IMR-90 (cell line): ENCODE measurements at regions of chr2 and their contacts with region 1.

Region 1: GRCh38 chr2:37648331-37649011 is 23.0 kb downstream of the CDC42EP3 start:
- DNase-seq: no peak
- ATAC-seq: peak; percentile 8
- H3K4me3 ChIP-seq: no peak overlapping the region
- H3K27ac ChIP-seq: peak overlapping the region; percentile 71; the same call in 1 of the 2 replicates
- H3K4me1 ChIP-seq: peaks cover 40% of the 10 kb centered on the region
- H3K27me3 ChIP-seq: no peaks in the 10 kb centered on the region
- CTCF ChIP-seq: no peak
- POLR2A ChIP-seq: no peak
- RAD21 ChIP-seq: no peak

Region 2: DNA sequence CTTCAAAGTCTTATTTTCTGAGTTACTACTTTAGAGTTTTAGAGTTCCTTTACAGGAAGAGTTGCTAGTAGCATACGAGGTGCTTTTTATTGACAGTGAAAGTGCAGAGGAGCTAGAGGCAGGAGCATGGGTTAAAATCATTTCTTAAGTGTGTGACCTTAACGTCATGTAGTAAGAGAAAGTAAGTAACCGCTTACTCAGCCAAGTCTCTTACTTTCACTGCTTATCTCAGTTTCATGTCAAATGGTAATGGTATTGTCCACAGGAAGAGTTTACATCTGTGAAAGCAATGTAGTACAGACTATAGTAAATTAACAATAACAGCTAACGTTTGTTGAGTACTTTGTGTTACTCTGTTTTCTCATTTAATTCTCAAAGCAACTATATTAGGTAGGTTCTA is 404.5 kb before region 1 on chr2:
- CTCF ChIA-PET with region 1: no interaction called
- POLR2A ChIA-PET with region 1: interaction called, 11 read pairs
- dilution Hi-C with region 1: no loop called
- in situ Hi-C with region 1: no loop called
- intact Hi-C with region 1: no loop called
- DNase-seq: no peak
- ATAC-seq: no peak
- H3K4me3 ChIP-seq: no peak overlapping the region
- H3K27ac ChIP-seq: no peak overlapping the region
- H3K4me1 ChIP-seq: peaks cover 5% of the 10 kb centered on the region; the same call in 1 of the 2 replicates
- H3K27me3 ChIP-seq: no peaks in the 10 kb centered on the region
- CTCF ChIP-seq: no peak
- POLR2A ChIP-seq: no peak
- RAD21 ChIP-seq: no peak